ENCODE measurements at regions of chr10 and their contacts with region 1.

Region 1: DNA sequence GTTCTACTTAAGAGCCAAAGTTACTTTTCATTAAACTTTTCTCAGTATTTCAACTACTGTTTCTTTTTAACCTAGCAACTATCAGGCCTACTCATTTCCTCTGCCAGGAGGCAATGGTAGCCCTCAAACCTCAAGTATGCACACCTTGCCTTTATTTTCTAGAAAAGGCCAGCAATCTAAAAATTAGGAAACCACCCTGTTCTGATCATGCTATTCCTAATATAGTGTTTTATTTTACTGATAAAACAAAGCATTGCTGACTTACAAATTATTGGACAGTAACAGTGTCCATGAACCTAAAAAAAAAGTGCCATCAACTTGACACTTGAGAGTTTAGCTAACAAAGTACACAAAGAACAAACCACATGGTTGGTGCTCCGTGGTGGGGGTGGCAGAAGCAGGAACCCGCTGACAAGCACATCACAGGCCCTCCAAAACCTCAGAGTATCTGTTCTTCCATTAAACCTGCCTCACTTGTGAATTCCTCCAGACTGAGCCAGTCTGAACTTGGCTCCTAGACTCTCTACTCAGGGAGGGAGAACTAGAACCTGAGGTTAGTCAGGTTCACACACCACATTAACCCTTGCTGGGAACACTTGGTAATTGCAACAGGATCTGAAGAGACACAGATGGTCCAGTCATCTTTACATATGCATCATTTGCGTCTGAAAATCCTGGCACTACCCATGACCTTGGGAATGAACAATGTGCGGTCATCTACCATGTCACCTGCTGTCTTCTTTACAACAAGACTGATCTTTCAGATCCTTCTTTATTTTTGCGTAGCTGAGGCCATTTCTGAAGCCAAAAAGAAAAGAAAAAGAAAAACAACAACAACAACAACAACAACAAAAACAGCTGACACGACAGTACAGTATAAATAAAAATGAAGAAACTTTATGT is 31.9 kb downstream of the PIP4K2A start:
- DNase-seq: peak; percentile 58
- H3K4me3 Mint-ChIP-seq: peak overlapping the region; percentile 69
- H3K27ac Mint-ChIP-seq: peak overlapping the region; percentile 98
- H3K4me1 Mint-ChIP-seq: peaks cover 83% of the 10 kb centered on the region
- H3K27me3 Mint-ChIP-seq: no peaks in the 10 kb centered on the region

Region 2: GRCh38 chr10:22003079-22003913 is 679.2 kb before region 1 on chr10 and contains the start of gene DNAJC1:
- intact Hi-C with region 1: loop called (anchors 10 kb)
- DNase-seq: peak; percentile 96
- H3K4me3 Mint-ChIP-seq: peak within 1 kb of the TSS; percentile 96
- H3K27ac Mint-ChIP-seq: peak within 1 kb of the TSS; percentile 91
- H3K4me1 Mint-ChIP-seq: peaks cover 34% of the 10 kb centered on the region
- H3K27me3 Mint-ChIP-seq: peaks cover 12% of the 10 kb centered on the region
- total RNA-seq, gene DNAJC1: 24.0 and 24.5 TPM in 2 replicates

Region 3: DNA sequence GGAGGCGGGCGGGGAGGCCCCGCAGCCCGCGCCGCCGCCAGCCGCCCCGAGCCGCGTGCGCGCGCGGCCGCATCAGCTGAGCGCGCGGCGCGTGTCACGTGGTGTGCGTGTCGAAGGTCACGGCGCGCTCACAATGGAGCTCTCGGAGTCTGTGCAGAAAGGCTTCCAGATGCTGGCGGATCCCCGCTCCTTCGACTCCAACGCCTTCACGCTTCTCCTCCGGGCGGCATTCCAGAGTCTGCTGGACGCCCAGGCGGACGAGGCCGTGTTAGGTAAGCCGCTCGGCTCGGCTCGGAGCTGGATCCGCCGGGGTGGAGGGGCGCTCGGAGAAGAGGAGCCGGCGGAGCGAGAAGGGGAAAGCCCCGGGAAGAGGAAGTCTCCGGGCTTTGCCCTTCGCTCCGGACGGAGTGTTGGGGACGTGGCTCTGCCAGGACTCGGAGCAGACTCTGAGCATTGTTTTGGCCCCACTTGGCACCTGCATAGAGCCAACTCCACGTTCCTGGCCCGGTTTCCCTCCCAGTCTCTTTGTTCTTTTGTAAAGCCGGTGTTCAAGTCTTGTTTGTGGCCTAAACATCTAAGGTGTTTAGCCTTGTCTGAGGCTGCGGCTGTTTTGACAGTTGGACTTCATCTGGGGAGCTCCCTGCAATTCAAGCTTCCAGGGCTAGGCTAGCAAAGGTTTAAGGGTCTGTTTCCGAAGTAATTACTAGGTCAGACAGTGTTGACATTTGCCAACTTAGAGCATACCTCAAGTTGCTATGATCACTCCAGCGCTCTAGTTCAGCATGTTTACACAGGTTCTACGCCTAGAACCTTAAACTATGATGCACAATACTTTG is 366.0 kb before region 1 on chr10 and contains the start of gene COMMD3:
- intact Hi-C with region 1: loop called (anchors 10 kb)
- DNase-seq: peak; percentile 79
- H3K4me3 Mint-ChIP-seq: peak within 1 kb of the TSS; percentile 88
- H3K27ac Mint-ChIP-seq: peak within 1 kb of the TSS; percentile 88
- H3K4me1 Mint-ChIP-seq: peaks cover 40% of the 10 kb centered on the region
- H3K27me3 Mint-ChIP-seq: peaks cover 1% of the 10 kb centered on the region
- total RNA-seq, gene COMMD3: 92.1 and 105 TPM in 2 replicates

Region 4: GRCh38 chr10:22615819-22616499 is 66.5 kb before region 1 on chr10:
- intact Hi-C with region 1: loop called (anchors 1 kb)
- DNase-seq: no peak
- H3K4me3 Mint-ChIP-seq: peak overlapping the region; percentile 23
- H3K27ac Mint-ChIP-seq: peak overlapping the region; percentile 45
- H3K4me1 Mint-ChIP-seq: peaks cover 83% of the 10 kb centered on the region
- H3K27me3 Mint-ChIP-seq: no peaks in the 10 kb centered on the region

Region 5: GRCh38 chr10:22648547-22648961 is 33.9 kb before region 1 on chr10:
- intact Hi-C with region 1: loop called (anchors 2 kb)
- DNase-seq: no peak
- H3K4me3 Mint-ChIP-seq: no peak overlapping the region
- H3K27ac Mint-ChIP-seq: peak overlapping the region; percentile 98
- H3K4me1 Mint-ChIP-seq: peaks cover 86% of the 10 kb centered on the region
- H3K27me3 Mint-ChIP-seq: no peaks in the 10 kb centered on the region

Region 6: GRCh38 chr10:22666287-22667092 is 16.0 kb before region 1 on chr10:
- intact Hi-C with region 1: loop called (anchors 1 kb)
- DNase-seq: peak; percentile 51
- H3K4me3 Mint-ChIP-seq: peak overlapping the region; percentile 74
- H3K27ac Mint-ChIP-seq: peak overlapping the region; percentile 82
- H3K4me1 Mint-ChIP-seq: peaks cover 56% of the 10 kb centered on the region
- H3K27me3 Mint-ChIP-seq: no peaks in the 10 kb centered on the region

Region 7: GRCh38 chr10:22714479-22715289 is 32.2 kb after region 1 on chr10 and contains the start of gene PIP4K2A:
- intact Hi-C with region 1: loop called (anchors 1 kb)
- DNase-seq: peak; percentile 70
- H3K4me3 Mint-ChIP-seq: peak within 1 kb of the TSS; percentile 85
- H3K27ac Mint-ChIP-seq: peak within 1 kb of the TSS; percentile 58
- H3K4me1 Mint-ChIP-seq: peaks cover 33% of the 10 kb centered on the region
- H3K27me3 Mint-ChIP-seq: peaks cover 6% of the 10 kb centered on the region
- total RNA-seq, gene PIP4K2A: 104 and 105 TPM in 2 replicates